ENCODE measurements at regions of chr11 and their contacts with region 1.

Region 1: DNA sequence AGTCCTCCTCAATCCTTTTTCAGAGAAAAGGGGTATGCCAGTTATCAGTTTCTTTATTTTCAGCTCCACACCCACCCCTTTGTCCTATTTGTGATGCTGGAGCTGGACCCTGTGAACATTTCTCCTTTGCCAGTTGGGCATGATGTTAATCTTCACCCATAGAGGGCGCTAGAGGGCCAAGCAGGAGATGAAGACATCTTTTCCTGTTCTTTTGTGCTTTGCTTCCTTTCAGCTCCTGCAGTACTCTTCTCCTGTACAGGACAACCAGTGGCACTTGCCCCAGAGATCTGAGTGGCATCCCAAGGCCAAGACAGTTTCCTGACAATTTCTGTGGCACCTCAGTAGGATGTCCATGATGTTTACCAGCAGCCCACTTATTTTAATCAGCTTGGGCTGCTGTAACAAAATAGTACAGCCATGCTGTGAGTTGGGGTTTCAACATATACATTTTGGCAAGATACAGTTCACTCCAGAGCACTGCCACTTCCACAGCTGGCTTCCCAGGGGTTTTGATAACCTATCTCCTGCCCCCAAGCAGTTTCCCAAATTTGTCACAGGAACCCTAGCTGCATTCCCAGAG is 4.6 kb downstream of the SAA2 start:
- DNase-seq: peak; percentile 83
- ATAC-seq: peak; percentile 45
- H3K4me3 Mint-ChIP-seq: no peak overlapping the region
- H3K27ac Mint-ChIP-seq: peak overlapping the region; percentile 5
- H3K4me1 Mint-ChIP-seq: peaks cover 37% of the 10 kb centered on the region
- H3K27me3 Mint-ChIP-seq: peaks cover 19% of the 10 kb centered on the region

Region 2: GRCh38 chr11:18091731-18092130 is 152.1 kb before region 1 on chr11:
- CTCF ChIA-PET with region 1: no interaction called
- POLR2A ChIA-PET with region 1: no interaction called
- DNase-seq: no peak
- ATAC-seq: no peak
- H3K4me3 Mint-ChIP-seq: no peak overlapping the region
- H3K27ac Mint-ChIP-seq: no peak overlapping the region
- H3K4me1 Mint-ChIP-seq: no peaks in the 10 kb centered on the region
- H3K27me3 Mint-ChIP-seq: no peaks in the 10 kb centered on the region

Region 3: GRCh38 chr11:18321980-18322711 is 78.3 kb after region 1 on chr11 and contains the starts of genes GTF2H1 and HPS5:
- CTCF ChIA-PET with region 1: interaction called, 40 read pairs
- POLR2A ChIA-PET with region 1: interaction called, 7 read pairs
- DNase-seq: peak; percentile 98
- ATAC-seq: peak; percentile 91
- H3K4me3 Mint-ChIP-seq: peak within 1 kb of the TSS; percentile 98
- H3K27ac Mint-ChIP-seq: peak within 1 kb of the TSS; percentile 100
- H3K4me1 Mint-ChIP-seq: peaks cover 65% of the 10 kb centered on the region
- H3K27me3 Mint-ChIP-seq: no peaks in the 10 kb centered on the region
- total RNA-seq, gene GTF2H1: 47.2 to 47.8 TPM
- total RNA-seq, gene HPS5: 15.8 to 18.0 TPM

Region 4: DNA sequence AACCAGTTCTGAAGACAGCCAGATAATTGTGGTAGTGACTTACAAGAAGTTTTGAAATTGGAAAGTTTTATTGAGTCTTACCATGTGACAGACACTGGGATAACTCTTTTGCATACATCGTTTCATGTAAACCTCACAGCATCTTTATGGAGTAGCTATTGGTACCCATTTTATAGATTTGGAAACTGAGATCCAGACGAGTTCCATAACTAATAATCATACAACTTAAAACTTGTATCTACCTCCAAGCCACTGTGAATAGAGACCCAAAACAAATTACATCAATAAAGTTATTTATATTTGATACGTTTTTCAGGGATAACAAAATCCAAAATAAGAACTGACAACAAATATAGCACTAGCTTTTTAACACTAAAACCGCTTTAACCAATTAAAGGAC is 114.8 kb after region 1 on chr11:
- CTCF ChIA-PET with region 1: interaction called, 11 read pairs
- POLR2A ChIA-PET with region 1: no interaction called
- DNase-seq: no peak
- ATAC-seq: no peak
- H3K4me3 Mint-ChIP-seq: no peak overlapping the region
- H3K27ac Mint-ChIP-seq: no peak overlapping the region
- H3K4me1 Mint-ChIP-seq: no peaks in the 10 kb centered on the region
- H3K27me3 Mint-ChIP-seq: no peaks in the 10 kb centered on the region

Region 5: GRCh38 chr11:18395735-18396504 is 152.0 kb after region 1 on chr11:
- CTCF ChIA-PET with region 1: interaction called, 35 read pairs
- POLR2A ChIA-PET with region 1: interaction called, 27 read pairs
- DNase-seq: peak; percentile 97
- ATAC-seq: peak; percentile 66
- H3K4me3 Mint-ChIP-seq: peak overlapping the region; percentile 99
- H3K27ac Mint-ChIP-seq: peak overlapping the region; percentile 98
- H3K4me1 Mint-ChIP-seq: peaks cover 56% of the 10 kb centered on the region
- H3K27me3 Mint-ChIP-seq: no peaks in the 10 kb centered on the region

Region 6: DNA sequence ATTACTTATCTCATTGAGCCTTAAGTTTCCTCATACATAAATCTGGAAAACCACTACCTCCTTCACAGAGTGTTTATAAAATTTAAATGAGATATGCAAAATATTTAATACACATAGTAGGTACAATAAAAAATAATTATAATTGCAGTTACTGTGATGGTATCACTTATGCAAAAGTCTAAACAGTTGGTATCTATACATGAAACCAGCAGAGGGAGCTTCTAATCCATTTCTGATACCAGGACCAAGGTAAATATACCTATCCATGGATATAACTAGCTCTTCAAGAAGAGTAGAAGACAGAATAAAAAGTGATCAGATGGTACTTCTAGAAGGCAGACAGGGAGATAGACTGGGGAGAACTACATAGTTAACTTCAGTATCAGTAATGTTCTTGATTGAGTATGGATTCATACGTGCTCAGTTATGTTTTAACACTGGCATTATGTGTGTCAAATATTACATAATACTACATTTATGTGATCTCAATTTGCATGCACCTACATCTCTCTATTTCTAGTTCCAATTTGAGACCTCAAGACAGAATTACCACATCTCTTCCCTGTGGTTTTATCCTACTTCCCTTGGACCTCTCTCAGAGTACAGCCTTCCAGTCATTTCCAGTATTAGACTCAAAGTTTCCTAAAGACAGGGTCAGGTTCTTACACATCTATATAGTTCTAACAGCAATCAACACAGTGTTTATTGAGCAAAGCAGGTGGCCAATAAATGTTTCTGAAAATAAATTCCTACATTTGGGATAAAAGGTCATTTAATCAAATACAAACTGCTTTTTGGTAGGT is 296.5 kb after region 1 on chr11:
- CTCF ChIA-PET with region 1: interaction called, 14 read pairs
- POLR2A ChIA-PET with region 1: no interaction called
- DNase-seq: no peak
- ATAC-seq: peak; percentile 81
- H3K4me3 Mint-ChIP-seq: no peak overlapping the region
- H3K27ac Mint-ChIP-seq: no peak overlapping the region
- H3K4me1 Mint-ChIP-seq: no peaks in the 10 kb centered on the region
- H3K27me3 Mint-ChIP-seq: no peaks in the 10 kb centered on the region

Region 7: GRCh38 chr11:18731949-18732821 is 488.3 kb after region 1 on chr11:
- CTCF ChIA-PET with region 1: interaction called, 18 read pairs
- POLR2A ChIA-PET with region 1: no interaction called
- DNase-seq: peak; percentile 76
- ATAC-seq: peak; percentile 62
- H3K4me3 Mint-ChIP-seq: no peak overlapping the region
- H3K27ac Mint-ChIP-seq: no peak overlapping the region
- H3K4me1 Mint-ChIP-seq: peaks cover 8% of the 10 kb centered on the region
- H3K27me3 Mint-ChIP-seq: peaks cover 2% of the 10 kb centered on the region